H1 (cell line): ENCODE measurements at regions of chr2 and their contacts with region 1.

Region 1: GRCh38 chr2:101036562-101037457 is 34.7 kb downstream of the RPL31 start:
- DNase-seq: no peak
- H3K4me3 ChIP-seq: no peak overlapping the region
- H3K27ac ChIP-seq: no peak overlapping the region
- H3K4me1 ChIP-seq: no peaks in the 10 kb centered on the region; a peak in 1 of 7 replicates
- H3K27me3 ChIP-seq: no peaks in the 10 kb centered on the region
- CTCF ChIP-seq: peak in 2 of 3 experiments; percentile 19 to 29; a peak in 2 of 4 replicates
- EP300 ChIP-seq: no peak
- POLR2A ChIP-seq: no peak
- RAD21 ChIP-seq: peak; percentile 42 to 55; a peak in 3 of 4 replicates

Region 2: DNA sequence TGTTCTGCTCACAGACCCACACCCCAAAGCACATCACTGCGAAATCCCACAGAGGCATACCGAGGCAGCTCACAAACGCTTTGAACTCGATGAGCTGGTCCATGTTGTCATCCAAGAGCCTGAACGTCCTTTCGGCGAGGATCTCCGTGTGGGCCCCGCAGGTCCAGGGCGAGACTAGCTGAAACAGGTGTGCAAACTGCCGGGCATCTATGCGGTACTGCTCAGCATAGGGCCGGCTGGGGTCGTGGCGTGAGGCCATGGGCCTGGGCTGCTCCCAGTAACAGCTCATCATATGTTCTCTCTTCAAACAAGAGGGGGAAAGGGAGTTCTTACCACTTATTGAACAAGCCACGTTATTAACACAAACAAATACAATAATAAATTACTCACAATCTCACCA is 14.6 kb before region 1 on chr2:
- CTCF ChIA-PET with region 1: interaction called, 37 read pairs
- POLR2A ChIA-PET with region 1: interaction called, 3 read pairs
- DNase-seq: no peak
- H3K4me3 ChIP-seq: no peak overlapping the region
- H3K27ac ChIP-seq: no peak overlapping the region
- H3K4me1 ChIP-seq: peaks cover 2 to 9% (median 5%) of the 10 kb centered on the region in 4 experiments; a peak in 5 of 7 replicates
- H3K27me3 ChIP-seq: no peaks in the 10 kb centered on the region
- CTCF ChIP-seq: no peak
- EP300 ChIP-seq: no peak
- POLR2A ChIP-seq: no peak
- RAD21 ChIP-seq: no peak

Region 3: DNA sequence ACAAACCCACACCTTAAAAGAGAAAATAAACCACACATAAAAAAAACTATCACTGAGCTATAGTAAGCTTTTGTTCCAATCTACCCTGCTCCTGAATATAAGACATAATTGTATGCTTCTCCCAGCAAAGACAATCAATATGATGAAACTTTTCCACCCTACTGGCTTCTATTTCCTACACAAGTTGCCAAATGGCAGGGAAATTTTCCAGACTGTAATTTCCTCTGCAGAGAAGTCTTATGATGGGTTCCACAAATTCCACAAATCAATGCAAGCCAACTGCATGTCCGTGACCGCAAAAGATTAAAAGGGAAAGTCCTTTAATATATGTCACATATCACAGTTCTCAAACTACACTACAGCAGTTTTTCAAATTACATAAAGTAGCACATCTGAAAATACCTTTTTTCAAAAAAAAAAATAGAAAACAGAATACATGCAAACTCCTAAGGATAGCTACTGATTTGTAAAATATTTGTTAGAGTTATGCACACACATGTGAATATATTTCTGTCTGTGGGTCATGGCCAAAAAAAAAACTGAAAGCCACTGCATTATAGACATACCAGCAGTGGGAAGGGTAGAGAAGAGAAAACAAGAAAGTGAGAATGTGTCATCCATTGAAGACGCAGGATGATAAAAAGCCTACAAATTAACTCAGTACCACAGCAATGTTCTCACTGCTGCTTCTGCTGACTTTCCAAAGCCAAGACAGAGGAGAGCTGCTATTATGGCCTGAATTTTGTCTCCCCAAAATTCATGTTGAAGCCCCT is 26.7 kb after region 1 on chr2:
- CTCF ChIA-PET with region 1: interaction called, 10 read pairs
- POLR2A ChIA-PET with region 1: no interaction called
- DNase-seq: no peak
- H3K4me3 ChIP-seq: no peak overlapping the region
- H3K27ac ChIP-seq: no peak overlapping the region
- H3K4me1 ChIP-seq: peaks cover 0 to 4% (median 1%) of the 10 kb centered on the region in 4 experiments; a peak in 2 of 7 replicates
- H3K27me3 ChIP-seq: no peaks in the 10 kb centered on the region
- CTCF ChIP-seq: no peak
- EP300 ChIP-seq: no peak
- POLR2A ChIP-seq: no peak
- RAD21 ChIP-seq: no peak

Region 4: GRCh38 chr2:101151141-101151858 is 114.5 kb after region 1 on chr2 and contains the start of gene TBC1D8:
- CTCF ChIA-PET with region 1: interaction called, 64 read pairs
- POLR2A ChIA-PET with region 1: interaction called, 11 read pairs
- DNase-seq: peak in 1 of 2 experiments; percentile 89
- H3K4me3 ChIP-seq: peak within 1 kb of the TSS; percentile 62 to 81 (median 72)
- H3K27ac ChIP-seq: no peak within 1 kb of the TSS
- H3K4me1 ChIP-seq: peaks cover 6 to 12% (median 9%) of the 10 kb centered on the region in 4 experiments
- H3K27me3 ChIP-seq: peaks cover 0 to 8% (median 2%) of the 10 kb centered on the region in 4 experiments; a peak in 4 of 7 replicates
- CTCF ChIP-seq: no peak
- EP300 ChIP-seq: no peak
- POLR2A ChIP-seq: peak in 1 of 2 experiments; percentile 42; a peak in 1 of 3 replicates
- RAD21 ChIP-seq: no peak
- total RNA-seq, gene TBC1D8: 21.8 and 24.0 TPM in 2 replicates

Region 5: DNA sequence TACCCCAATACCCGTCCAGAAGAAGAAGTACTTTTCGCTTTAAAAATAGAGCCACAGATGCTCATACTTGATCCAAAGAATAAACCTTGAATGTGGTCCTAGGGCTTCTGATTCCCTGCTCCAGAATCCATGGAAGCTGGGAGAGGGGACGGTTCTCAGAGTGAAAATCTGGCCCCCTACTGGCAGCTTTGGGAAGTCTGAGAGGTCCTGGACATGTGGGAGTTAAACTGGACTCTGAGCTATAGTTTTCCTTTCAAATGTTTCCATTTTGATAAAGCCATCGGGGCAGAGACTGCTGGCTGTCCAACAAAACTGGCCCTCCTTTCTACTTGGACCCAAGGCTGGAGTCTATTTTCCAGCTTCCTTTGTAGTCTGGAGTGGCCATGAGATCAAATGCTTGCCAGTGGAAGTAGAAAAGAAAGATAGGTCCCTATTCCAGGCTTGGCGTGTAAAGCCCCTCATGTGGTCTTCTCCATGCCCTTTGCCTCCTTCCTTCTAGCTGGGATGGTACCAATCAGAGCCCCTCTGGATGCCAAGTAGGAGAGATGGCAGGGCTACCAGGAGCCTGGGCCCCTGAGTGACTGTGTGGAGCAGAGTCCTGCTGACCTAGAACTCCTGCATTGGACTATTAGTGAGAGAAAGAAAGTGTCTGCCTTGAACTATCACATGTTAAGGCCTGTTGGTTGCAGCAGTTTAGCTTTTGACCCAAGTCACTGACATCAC is 152.0 kb after region 1 on chr2:
- CTCF ChIA-PET with region 1: interaction called, 30 read pairs
- POLR2A ChIA-PET with region 1: no interaction called
- DNase-seq: peak in 1 of 2 experiments; percentile 84
- H3K4me3 ChIP-seq: no peak overlapping the region
- H3K27ac ChIP-seq: no peak overlapping the region
- H3K4me1 ChIP-seq: peaks cover 0 to 10% (median 2%) of the 10 kb centered on the region in 4 experiments; a peak in 4 of 7 replicates
- H3K27me3 ChIP-seq: no peaks in the 10 kb centered on the region
- CTCF ChIP-seq: peak; percentile 58 to 70 (median 69)
- EP300 ChIP-seq: no peak
- POLR2A ChIP-seq: no peak
- RAD21 ChIP-seq: peak; percentile 38 to 62; a peak in 3 of 4 replicates

Region 6: GRCh38 chr2:101219246-101219645 is 182.4 kb after region 1 on chr2:
- CTCF ChIA-PET with region 1: interaction called, 20 read pairs
- POLR2A ChIA-PET with region 1: no interaction called
- DNase-seq: no peak
- H3K4me3 ChIP-seq: no peak overlapping the region
- H3K27ac ChIP-seq: no peak overlapping the region
- H3K4me1 ChIP-seq: no peaks in the 10 kb centered on the region
- H3K27me3 ChIP-seq: no peaks in the 10 kb centered on the region
- CTCF ChIP-seq: no peak
- EP300 ChIP-seq: no peak
- POLR2A ChIP-seq: no peak
- RAD21 ChIP-seq: no peak

Region 7: GRCh38 chr2:102197389-102198137 is 1160.8 kb after region 1 on chr2:
- CTCF ChIA-PET with region 1: no interaction called
- POLR2A ChIA-PET with region 1: no interaction called
- DNase-seq: no peak
- H3K4me3 ChIP-seq: no peak overlapping the region
- H3K27ac ChIP-seq: no peak overlapping the region
- H3K4me1 ChIP-seq: peaks cover 0 to 5% (median 0%) of the 10 kb centered on the region in 4 experiments; a peak in 1 of 7 replicates
- H3K27me3 ChIP-seq: no peaks in the 10 kb centered on the region
- CTCF ChIP-seq: no peak
- EP300 ChIP-seq: no peak
- POLR2A ChIP-seq: no peak
- RAD21 ChIP-seq: no peak